MCF 10A (cell line): ENCODE measurements at regions of chr20 and their contacts with region 1.

Region 1: GRCh38 chr20:39874049-39874888 is 814.8 kb downstream of the MAFB start:
- DNase-seq: peak; percentile 88
- H3K4me3 Mint-ChIP-seq: no peak overlapping the region
- H3K27ac Mint-ChIP-seq: no peak overlapping the region
- H3K4me1 Mint-ChIP-seq: peaks cover 50% of the 10 kb centered on the region
- H3K27me3 Mint-ChIP-seq: no peaks in the 10 kb centered on the region
- CTCF ChIP-seq: peak; percentile 93

Region 2: DNA sequence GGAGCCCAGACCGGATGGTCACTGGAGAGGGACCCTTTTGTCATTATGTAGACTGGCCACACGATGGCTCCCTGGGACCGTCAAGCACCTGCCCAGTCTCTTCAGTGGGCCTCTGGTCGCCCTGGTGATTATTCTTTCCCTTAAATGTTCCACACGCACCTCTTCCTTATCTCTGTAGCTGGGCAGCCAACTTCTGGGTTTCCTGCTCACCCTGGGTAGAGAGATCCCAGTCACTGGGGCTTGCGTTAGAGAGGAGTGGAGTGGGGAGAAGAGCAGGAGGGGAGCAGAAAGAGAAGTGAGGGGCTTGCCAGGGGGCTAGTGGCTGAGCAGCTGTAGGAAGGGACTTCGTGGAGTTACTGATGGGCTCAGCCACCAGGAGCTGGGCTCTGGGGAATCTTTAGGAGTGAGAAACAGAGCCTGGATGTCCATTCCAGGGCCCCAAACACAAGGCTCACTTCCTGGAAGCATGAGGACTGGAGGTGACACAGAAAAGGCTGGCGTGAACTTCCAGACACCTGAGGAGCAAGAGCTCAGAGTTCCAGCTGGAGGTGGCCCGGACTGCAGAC is 762.0 kb before region 1 on chr20:
- CTCF ChIA-PET with region 1: interaction called, 17 read pairs
- POLR2A ChIA-PET with region 1: no interaction called
- intact Hi-C with region 1: loop called (anchors 1 kb)
- DNase-seq: peak; percentile 50
- H3K4me3 Mint-ChIP-seq: no peak overlapping the region
- H3K27ac Mint-ChIP-seq: no peak overlapping the region
- H3K4me1 Mint-ChIP-seq: peaks cover 5% of the 10 kb centered on the region
- H3K27me3 Mint-ChIP-seq: peaks cover 36% of the 10 kb centered on the region
- CTCF ChIP-seq: peak; percentile 88

Region 3: GRCh38 chr20:39282619-39283392 is 591.5 kb before region 1 on chr20:
- CTCF ChIA-PET with region 1: interaction called, 4 read pairs
- POLR2A ChIA-PET with region 1: no interaction called
- intact Hi-C with region 1: loop called (anchors 5 kb)
- DNase-seq: no peak
- H3K4me3 Mint-ChIP-seq: no peak overlapping the region
- H3K27ac Mint-ChIP-seq: no peak overlapping the region
- H3K4me1 Mint-ChIP-seq: no peaks in the 10 kb centered on the region
- H3K27me3 Mint-ChIP-seq: peaks cover 11% of the 10 kb centered on the region
- CTCF ChIP-seq: no peak

Region 4: GRCh38 chr20:39775110-39775509 is 99.2 kb before region 1 on chr20:
- CTCF ChIA-PET with region 1: interaction called, 8 read pairs
- POLR2A ChIA-PET with region 1: no interaction called
- intact Hi-C with region 1: loop called (anchors 5 kb)
- DNase-seq: peak; percentile 91
- H3K4me3 Mint-ChIP-seq: no peak overlapping the region
- H3K27ac Mint-ChIP-seq: peak overlapping the region; percentile 5
- H3K4me1 Mint-ChIP-seq: peaks cover 21% of the 10 kb centered on the region
- H3K27me3 Mint-ChIP-seq: no peaks in the 10 kb centered on the region
- CTCF ChIP-seq: no peak

Region 5: DNA sequence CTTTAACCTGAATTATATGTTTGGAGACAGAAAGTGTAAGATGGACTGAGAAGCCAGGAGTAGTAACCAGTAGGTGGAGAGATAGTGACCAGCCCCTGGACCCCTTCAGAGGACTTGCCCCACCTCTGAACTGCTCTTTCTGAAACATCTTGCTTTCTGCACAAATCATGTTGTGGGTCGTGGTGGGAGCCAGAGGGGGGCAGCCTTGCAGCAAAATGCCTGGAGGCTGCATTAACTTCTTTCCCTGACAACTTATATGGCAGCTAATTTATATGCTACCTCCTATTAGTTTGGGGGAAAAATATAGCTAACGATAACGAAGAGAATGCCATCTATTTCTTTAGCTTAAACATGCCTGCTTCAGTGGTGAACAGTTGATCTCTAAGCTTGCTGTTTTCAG is 45.0 kb before region 1 on chr20:
- CTCF ChIA-PET with region 1: interaction called, 10 read pairs
- POLR2A ChIA-PET with region 1: interaction called, 7 read pairs
- intact Hi-C with region 1: loop called (anchors 1 kb)
- DNase-seq: no peak
- H3K4me3 Mint-ChIP-seq: no peak overlapping the region
- H3K27ac Mint-ChIP-seq: no peak overlapping the region
- H3K4me1 Mint-ChIP-seq: peaks cover 18% of the 10 kb centered on the region
- H3K27me3 Mint-ChIP-seq: no peaks in the 10 kb centered on the region
- CTCF ChIP-seq: no peak

Region 6: GRCh38 chr20:39855799-39856198 is 18.5 kb before region 1 on chr20:
- CTCF ChIA-PET with region 1: interaction called, 35 read pairs
- POLR2A ChIA-PET with region 1: interaction called, 11 read pairs
- intact Hi-C with region 1: no loop called
- DNase-seq: no peak
- H3K4me3 Mint-ChIP-seq: no peak overlapping the region
- H3K27ac Mint-ChIP-seq: no peak overlapping the region
- H3K4me1 Mint-ChIP-seq: peaks cover 39% of the 10 kb centered on the region
- H3K27me3 Mint-ChIP-seq: no peaks in the 10 kb centered on the region
- CTCF ChIP-seq: no peak

Region 7: GRCh38 chr20:40962730-40963504 is 1088.6 kb after region 1 on chr20:
- CTCF ChIA-PET with region 1: interaction called, 13 read pairs
- POLR2A ChIA-PET with region 1: no interaction called
- intact Hi-C with region 1: no loop called
- DNase-seq: peak; percentile 71
- H3K4me3 Mint-ChIP-seq: no peak overlapping the region
- H3K27ac Mint-ChIP-seq: no peak overlapping the region
- H3K4me1 Mint-ChIP-seq: peaks cover 20% of the 10 kb centered on the region
- H3K27me3 Mint-ChIP-seq: no peaks in the 10 kb centered on the region
- CTCF ChIP-seq: peak; percentile 84